Activated naive CD4-positive, alpha-beta T cell treated with anti-CD3 and anti-CD28 coated beads for 36 hours (primary cell): ENCODE measurements at regions of chr16 and their contacts with region 1.

Region 1: DNA sequence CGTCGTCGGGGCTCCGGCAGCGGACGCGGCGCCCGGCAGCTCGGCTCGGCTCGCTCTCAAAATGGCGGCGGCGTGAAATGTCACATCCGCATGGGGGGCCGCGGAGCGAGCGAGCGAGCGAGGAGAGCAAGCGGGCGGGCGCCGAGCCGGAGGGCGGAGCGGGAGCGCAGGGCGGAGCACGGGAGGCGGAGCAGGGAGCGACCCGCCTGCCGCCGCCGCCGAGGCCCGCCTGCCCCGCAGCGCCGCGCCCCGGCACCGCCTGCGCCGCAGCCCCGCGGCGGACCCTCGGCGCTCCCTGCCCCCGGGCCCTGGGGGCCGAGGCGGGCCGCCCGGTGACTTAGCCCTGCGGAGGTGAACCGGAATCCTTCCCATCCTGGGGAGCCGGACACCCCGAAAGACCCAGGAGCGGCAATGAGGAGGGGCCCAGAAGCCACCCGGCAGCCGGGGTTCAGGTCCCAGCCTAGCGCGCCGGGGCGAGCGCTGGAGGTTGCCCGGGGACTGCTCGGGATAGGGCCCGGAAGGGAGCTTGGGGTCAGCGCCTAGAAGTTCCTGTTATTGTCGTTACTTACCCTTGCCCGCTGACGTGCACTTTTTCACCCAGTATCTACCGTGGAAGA is at the start of gene USP7:
- DNase-seq: peak; percentile 94
- H3K4me3 Mint-ChIP-seq: peak within 1 kb of the TSS; percentile 86
- H3K27ac Mint-ChIP-seq: peak within 1 kb of the TSS; percentile 88
- H3K4me1 Mint-ChIP-seq: peaks cover 38% of the 10 kb centered on the region
- H3K27me3 Mint-ChIP-seq: peaks cover 3% of the 10 kb centered on the region
- total RNA-seq, gene USP7: 155 to 163 TPM

Region 2: GRCh38 chr16:8621572-8622314 is 342.2 kb before region 1 on chr16 and contains the start of gene METTL22:
- CTCF ChIA-PET with region 1: no interaction called
- intact Hi-C with region 1: loop called (anchors 5 kb)
- DNase-seq: peak; percentile 92
- H3K4me3 Mint-ChIP-seq: peak within 1 kb of the TSS; percentile 97
- H3K27ac Mint-ChIP-seq: peak within 1 kb of the TSS; percentile 70
- H3K4me1 Mint-ChIP-seq: peaks cover 27% of the 10 kb centered on the region
- H3K27me3 Mint-ChIP-seq: no peaks in the 10 kb centered on the region
- total RNA-seq, gene METTL22: 43.2 to 48.4 TPM

Region 3: GRCh38 chr16:8920645-8921346 is 43.1 kb before region 1 on chr16:
- CTCF ChIA-PET with region 1: no interaction called
- intact Hi-C with region 1: loop called (anchors 1 kb)
- DNase-seq: no peak
- H3K4me3 Mint-ChIP-seq: no peak overlapping the region
- H3K27ac Mint-ChIP-seq: peak overlapping the region; percentile 63
- H3K4me1 Mint-ChIP-seq: peaks cover 53% of the 10 kb centered on the region
- H3K27me3 Mint-ChIP-seq: no peaks in the 10 kb centered on the region

Region 4: DNA sequence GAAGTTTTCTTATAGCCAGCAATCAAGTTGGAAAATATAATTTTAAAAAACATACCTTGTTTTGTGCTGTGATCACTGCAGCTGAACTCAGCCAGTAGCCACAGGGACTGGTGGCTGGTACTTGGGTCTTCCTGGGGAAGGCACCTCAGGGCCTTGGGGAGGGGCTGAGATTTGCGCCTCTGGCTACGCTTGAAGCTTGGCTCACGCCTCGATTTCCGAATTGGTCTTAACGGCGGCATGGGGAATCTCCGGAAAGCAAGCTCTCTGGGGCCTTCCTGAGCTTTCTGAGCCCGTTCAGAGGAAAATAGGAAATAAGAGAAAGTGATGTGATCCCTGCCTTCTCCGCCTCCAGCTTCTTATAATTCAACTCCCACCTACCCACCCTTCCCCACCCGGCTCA is 11.1 kb after region 1 on chr16:
- CTCF ChIA-PET with region 1: no interaction called
- intact Hi-C with region 1: no loop called
- DNase-seq: no peak
- H3K4me3 Mint-ChIP-seq: no peak overlapping the region
- H3K27ac Mint-ChIP-seq: no peak overlapping the region
- H3K4me1 Mint-ChIP-seq: no peaks in the 10 kb centered on the region
- H3K27me3 Mint-ChIP-seq: no peaks in the 10 kb centered on the region

Region 5: GRCh38 chr16:9047686-9048301 is 83.9 kb after region 1 on chr16:
- CTCF ChIA-PET with region 1: no interaction called
- intact Hi-C with region 1: loop called (anchors 5 kb)
- DNase-seq: peak; percentile 81
- H3K4me3 Mint-ChIP-seq: no peak overlapping the region
- H3K27ac Mint-ChIP-seq: peak overlapping the region; percentile 57
- H3K4me1 Mint-ChIP-seq: peaks cover 32% of the 10 kb centered on the region
- H3K27me3 Mint-ChIP-seq: no peaks in the 10 kb centered on the region

Region 6: GRCh38 chr16:10944249-10945064 is 1980.5 kb after region 1 on chr16 and contains the start of gene CLEC16A:
- CTCF ChIA-PET with region 1: no interaction called
- intact Hi-C with region 1: loop called (anchors 2 kb)
- DNase-seq: peak; percentile 97
- H3K4me3 Mint-ChIP-seq: peak within 1 kb of the TSS; percentile 81
- H3K27ac Mint-ChIP-seq: peak within 1 kb of the TSS; percentile 70
- H3K4me1 Mint-ChIP-seq: peaks cover 61% of the 10 kb centered on the region
- H3K27me3 Mint-ChIP-seq: no peaks in the 10 kb centered on the region
- total RNA-seq, gene CLEC16A: 18.4 to 20.1 TPM